GM12878 (cell line): ENCODE measurements at regions of chr22 and their contacts with region 1.

Region 1: DNA sequence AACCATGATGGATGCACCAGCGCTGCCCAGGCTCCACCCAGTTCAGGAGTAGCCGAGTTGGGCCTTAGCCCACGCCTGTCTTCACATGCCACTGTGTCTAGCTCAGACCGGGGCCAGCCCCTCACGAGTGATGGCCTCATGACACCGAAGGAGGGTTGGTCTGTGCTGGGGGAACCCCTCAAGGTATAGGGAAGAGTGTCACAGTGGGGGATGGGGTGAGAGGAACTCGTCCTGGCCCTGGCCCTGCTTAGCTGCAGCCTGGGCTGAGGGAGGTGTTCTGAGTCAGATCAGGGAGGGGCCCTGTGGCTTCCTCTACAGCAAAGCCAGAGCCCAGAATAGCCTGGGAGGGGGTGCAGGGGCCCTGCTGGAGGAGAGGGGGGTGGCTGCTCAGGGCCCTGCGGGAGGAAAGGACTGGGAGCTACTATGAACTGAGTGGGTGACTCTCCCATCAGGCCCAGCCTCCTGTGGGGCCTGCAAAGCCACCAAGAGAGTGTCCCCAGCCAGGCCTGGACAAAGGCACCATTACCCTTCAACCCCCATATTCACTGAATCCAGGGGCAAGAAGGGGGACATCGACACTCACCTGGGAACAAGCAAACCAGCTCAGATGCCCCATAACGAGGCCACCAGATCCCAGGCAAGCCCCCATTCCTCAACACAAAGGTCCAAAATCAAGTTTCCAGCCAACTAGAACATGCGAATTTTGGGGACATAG is 41.2 kb downstream of the IGLL5 start:
- DNase-seq: peak; percentile 99
- ATAC-seq: peak; percentile 87
- H3K4me3 ChIP-seq: peak overlapping the region; percentile 14; the same call in 1 of the 2 replicates
- H3K27ac ChIP-seq: peak overlapping the region; percentile 99
- H3K4me1 ChIP-seq: peaks cover 81% of the 10 kb centered on the region
- H3K27me3 ChIP-seq: no peaks in the 10 kb centered on the region
- CTCF ChIP-seq: no peak
- EP300 ChIP-seq: peak; percentile 86 to 89; a peak in 3 of 4 replicates
- POLR2A ChIP-seq: peak; percentile 88
- RAD21 ChIP-seq: peak; percentile 27; the same call in 1 of the 2 replicates

Region 2: GRCh38 chr22:22913989-22914388 is 14.8 kb before region 1 on chr22:
- CTCF ChIA-PET with region 1: interaction called, 7 read pairs
- POLR2A ChIA-PET with region 1: interaction called, 10 read pairs
- RAD21 ChIA-PET with region 1: interaction called, 4 read pairs
- SMC1A ChIA-PET with region 1: interaction called, 11 read pairs
- in situ Hi-C with region 1: no loop called
- intact Hi-C with region 1: no loop called
- DNase-seq: no peak
- ATAC-seq: peak; percentile 61
- H3K4me3 ChIP-seq: no peak overlapping the region
- H3K27ac ChIP-seq: no peak overlapping the region
- H3K4me1 ChIP-seq: peaks cover 31% of the 10 kb centered on the region
- H3K27me3 ChIP-seq: no peaks in the 10 kb centered on the region
- CTCF ChIP-seq: no peak
- EP300 ChIP-seq: no peak
- POLR2A ChIP-seq: no peak
- RAD21 ChIP-seq: no peak

Region 3: GRCh38 chr22:22981670-22982571 is 53.1 kb after region 1 on chr22:
- CTCF ChIA-PET with region 1: no interaction called
- POLR2A ChIA-PET with region 1: no interaction called
- RAD21 ChIA-PET with region 1: no interaction called
- SMC1A ChIA-PET with region 1: no interaction called
- in situ Hi-C with region 1: no loop called
- intact Hi-C with region 1: no loop called
- DNase-seq: no peak
- ATAC-seq: peak; percentile 39
- H3K4me3 ChIP-seq: no peak overlapping the region
- H3K27ac ChIP-seq: no peak overlapping the region
- H3K4me1 ChIP-seq: no peaks in the 10 kb centered on the region
- H3K27me3 ChIP-seq: no peaks in the 10 kb centered on the region; a peak in 1 of 4 replicates
- CTCF ChIP-seq: no peak
- EP300 ChIP-seq: no peak
- POLR2A ChIP-seq: no peak
- RAD21 ChIP-seq: no peak